Activated B cell treated with CpG ODN at 0.5 μM for 24 hours (primary cell): ENCODE measurements at regions of chr17 and their contacts with region 1.

Region 1: GRCh38 chr17:47172698-47173565 is 16.2 kb downstream of the CDC27 start:
- DNase-seq: no peak
- ATAC-seq: no peak
- H3K4me3 Mint-ChIP-seq: no peak overlapping the region
- H3K27ac Mint-ChIP-seq: no peak overlapping the region
- H3K4me1 Mint-ChIP-seq: peaks cover 32% of the 10 kb centered on the region
- H3K27me3 Mint-ChIP-seq: no peaks in the 10 kb centered on the region
- CTCF ChIP-seq: no peak

Region 2: DNA sequence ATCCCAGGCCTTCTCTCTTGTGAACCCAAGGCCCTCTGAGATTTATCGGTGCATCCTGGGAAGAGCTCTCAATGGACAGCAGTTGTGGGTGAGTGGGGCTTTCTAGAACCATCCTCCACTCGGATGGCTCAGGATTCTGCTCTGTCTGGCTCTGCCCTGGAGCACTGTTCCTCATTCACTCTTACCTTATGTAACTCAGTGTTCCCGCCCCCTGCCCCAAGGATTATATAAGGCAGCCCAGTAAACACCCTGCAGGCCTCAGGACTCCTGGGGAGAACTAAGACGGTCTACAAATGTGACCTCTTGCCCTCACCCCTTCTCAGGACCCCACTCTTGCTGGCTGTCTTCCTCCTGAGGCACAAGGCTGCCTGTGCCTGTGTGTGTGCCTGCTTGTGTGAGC is 197.6 kb before region 1 on chr17:
- CTCF ChIA-PET with region 1: no interaction called
- POLR2A ChIA-PET with region 1: interaction called, 11 read pairs
- intact Hi-C with region 1: no loop called
- DNase-seq: no peak
- ATAC-seq: no peak
- H3K4me3 Mint-ChIP-seq: no peak overlapping the region
- H3K27ac Mint-ChIP-seq: no peak overlapping the region
- H3K4me1 Mint-ChIP-seq: peaks cover 13% of the 10 kb centered on the region
- H3K27me3 Mint-ChIP-seq: peaks cover 16% of the 10 kb centered on the region
- CTCF ChIP-seq: no peak

Region 3: DNA sequence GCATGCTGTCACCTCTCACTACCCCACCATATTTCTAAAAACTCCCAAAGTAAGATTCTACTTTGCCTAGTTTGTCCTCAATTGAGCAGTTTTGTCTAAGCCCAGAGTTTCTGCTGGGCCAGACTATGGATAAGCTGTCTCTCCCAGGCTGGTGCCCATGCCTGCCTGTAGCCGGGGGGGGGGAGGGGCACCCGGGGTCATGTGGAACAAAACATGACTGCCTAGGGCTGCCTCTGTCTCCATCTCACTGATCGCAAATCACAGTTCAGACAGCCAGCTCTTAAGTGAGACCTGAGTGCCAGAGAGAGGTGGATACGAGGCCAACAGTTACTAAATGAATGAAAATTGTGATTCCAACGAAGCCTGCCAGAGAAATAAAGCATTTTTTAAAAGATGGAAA is 115.1 kb before region 1 on chr17:
- CTCF ChIA-PET with region 1: no interaction called
- POLR2A ChIA-PET with region 1: no interaction called
- intact Hi-C with region 1: no loop called
- DNase-seq: no peak
- ATAC-seq: no peak
- H3K4me3 Mint-ChIP-seq: no peak overlapping the region
- H3K27ac Mint-ChIP-seq: no peak overlapping the region
- H3K4me1 Mint-ChIP-seq: no peaks in the 10 kb centered on the region
- H3K27me3 Mint-ChIP-seq: no peaks in the 10 kb centered on the region
- CTCF ChIP-seq: no peak

Region 4: GRCh38 chr17:47145351-47145750 is 27.6 kb before region 1 on chr17:
- CTCF ChIA-PET with region 1: no interaction called
- POLR2A ChIA-PET with region 1: no interaction called
- intact Hi-C with region 1: no loop called
- DNase-seq: no peak
- ATAC-seq: no peak
- H3K4me3 Mint-ChIP-seq: no peak overlapping the region
- H3K27ac Mint-ChIP-seq: no peak overlapping the region
- H3K4me1 Mint-ChIP-seq: no peaks in the 10 kb centered on the region
- H3K27me3 Mint-ChIP-seq: no peaks in the 10 kb centered on the region
- CTCF ChIP-seq: no peak